H1 (cell line): ENCODE measurements at regions of chr5 and their contacts with region 1.

Region 1: DNA sequence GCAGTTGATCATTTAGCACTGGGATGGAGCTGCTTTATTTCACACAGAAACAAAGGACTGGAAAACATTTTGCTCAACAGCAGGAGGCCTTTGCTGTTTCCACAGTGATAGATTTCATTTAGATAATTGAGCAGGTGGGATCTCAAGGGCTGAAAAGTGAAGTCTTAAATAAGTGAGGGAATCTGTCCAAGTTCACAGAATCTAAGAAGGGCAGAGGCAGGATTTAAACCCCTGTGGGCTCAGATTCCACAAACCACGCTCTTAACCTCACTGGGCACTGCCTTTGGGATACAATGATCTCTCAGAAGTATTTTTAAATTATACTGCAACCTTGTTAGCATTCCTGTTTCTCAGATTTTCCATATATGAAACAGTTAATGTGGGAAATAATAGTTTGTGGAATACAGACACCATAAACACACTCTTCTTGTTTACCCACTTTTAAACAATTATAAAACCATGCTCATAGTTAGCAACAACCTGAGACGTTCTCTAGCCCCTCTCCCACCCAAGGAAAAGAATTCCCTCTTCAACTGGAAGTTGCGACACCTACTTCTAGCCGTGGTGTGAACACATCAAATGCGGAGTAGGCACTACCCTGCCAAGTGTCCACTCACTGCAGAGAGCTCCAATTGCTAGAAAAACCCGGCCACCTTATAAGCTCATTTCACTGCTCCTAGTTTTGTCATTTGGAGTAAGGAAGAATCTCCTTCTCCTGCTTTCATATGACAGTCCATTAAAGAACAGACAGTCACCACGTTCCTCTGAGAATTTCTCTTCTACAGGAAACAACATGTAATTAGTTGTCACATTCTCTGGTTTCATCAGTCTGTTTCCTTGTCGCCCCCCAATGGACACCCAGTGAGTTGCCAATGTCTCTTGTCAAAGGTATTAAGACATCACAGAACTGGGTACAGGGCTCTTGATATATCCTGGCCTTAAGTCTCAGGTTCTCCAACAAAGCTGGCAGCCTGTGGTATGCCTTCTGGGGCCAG is 47.4 kb downstream of the PRLR start:
- DNase-seq: peak; percentile 19 to 63
- H3K4me3 ChIP-seq: no peak overlapping the region
- H3K27ac ChIP-seq: no peak overlapping the region
- H3K4me1 ChIP-seq: no peaks in the 10 kb centered on the region
- H3K27me3 ChIP-seq: no peaks in the 10 kb centered on the region
- CTCF ChIP-seq: peak in 2 of 3 experiments; percentile 68 to 77; a peak in 3 of 4 replicates
- EP300 ChIP-seq: no peak
- POLR2A ChIP-seq: no peak
- RAD21 ChIP-seq: peak; percentile 82 to 90

Region 2: DNA sequence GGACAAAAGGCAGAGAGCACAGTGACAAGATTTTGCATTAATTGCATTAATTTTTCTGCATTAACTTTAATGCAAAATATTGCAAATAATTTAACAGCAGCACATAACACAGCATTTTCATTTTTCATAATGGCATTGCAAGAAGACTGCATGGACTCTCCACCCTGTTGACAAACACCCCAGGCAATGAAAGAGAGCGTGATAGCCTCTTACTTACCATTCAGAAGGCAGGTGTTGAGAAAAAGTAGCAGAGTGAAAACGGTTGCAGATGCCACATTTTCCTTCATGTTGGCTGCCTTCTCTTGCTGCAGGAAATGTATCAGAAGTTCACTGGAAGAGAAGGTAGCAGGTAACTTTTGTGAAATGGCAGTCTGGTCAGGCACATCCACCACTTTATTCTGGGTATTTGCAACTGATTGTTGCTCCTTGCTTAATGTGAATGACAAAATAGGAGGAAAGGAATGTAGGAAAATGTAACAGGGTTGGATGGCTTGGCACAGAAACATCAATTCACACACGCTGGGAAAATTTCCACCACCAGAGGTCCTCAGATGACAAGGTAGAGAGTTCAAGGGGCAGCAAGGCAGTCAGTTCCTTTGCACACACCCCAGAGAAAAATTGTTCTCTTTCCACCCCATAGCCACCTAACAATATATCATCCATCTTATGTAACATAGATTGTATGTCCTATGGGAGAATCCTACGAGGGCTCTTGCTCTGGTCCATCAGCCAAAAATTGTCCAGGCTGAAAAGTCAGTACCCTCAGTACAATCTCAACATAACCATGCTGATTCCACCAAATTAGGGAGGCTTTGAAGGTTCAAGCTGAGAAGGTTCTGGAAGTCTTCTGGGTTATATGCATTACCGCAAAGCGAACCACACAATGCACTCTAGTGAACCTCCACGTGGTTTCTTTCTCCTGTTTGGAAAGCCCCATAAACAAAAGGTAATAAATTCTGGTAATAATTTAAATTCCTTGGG is 93.2 kb before region 1 on chr5:
- CTCF ChIA-PET with region 1: interaction called, 22 read pairs
- POLR2A ChIA-PET with region 1: no interaction called
- DNase-seq: peak; percentile 29 to 84
- H3K4me3 ChIP-seq: no peak overlapping the region
- H3K27ac ChIP-seq: no peak overlapping the region
- H3K4me1 ChIP-seq: peaks cover 0 to 4% (median 1%) of the 10 kb centered on the region in 4 experiments; a peak in 2 of 7 replicates
- H3K27me3 ChIP-seq: 0 out of 7 replicates have a peak, but pooled peaks cover 0 to 2% (median 0%) of the 10 kb centered on the region in 4 experiments
- CTCF ChIP-seq: peak; percentile 65 to 94 (median 84)
- EP300 ChIP-seq: no peak
- POLR2A ChIP-seq: no peak
- RAD21 ChIP-seq: peak; percentile 99

Region 3: DNA sequence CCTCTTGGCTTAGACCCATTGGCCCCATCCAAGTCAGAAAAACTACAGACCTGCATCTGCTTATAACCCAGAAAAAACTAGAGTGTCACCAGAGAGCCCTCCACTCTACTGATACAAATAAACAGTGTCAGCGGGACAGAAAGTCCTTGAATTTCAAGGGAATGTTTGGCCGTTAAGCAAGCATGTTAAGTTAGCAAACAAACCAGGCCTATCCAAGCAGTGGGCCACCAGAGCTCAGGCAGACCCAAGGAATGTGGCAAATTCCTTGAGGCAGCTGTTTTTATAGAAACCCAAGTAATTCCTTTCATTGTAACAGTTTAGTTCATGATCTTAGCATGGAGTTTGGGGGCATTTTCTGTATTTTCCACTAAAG is 23.5 kb before region 1 on chr5:
- CTCF ChIA-PET with region 1: interaction called, 13 read pairs
- POLR2A ChIA-PET with region 1: no interaction called
- DNase-seq: peak in 1 of 2 experiments; percentile 10
- H3K4me3 ChIP-seq: no peak overlapping the region
- H3K27ac ChIP-seq: no peak overlapping the region
- H3K4me1 ChIP-seq: no peaks in the 10 kb centered on the region; a peak in 1 of 7 replicates
- H3K27me3 ChIP-seq: no peaks in the 10 kb centered on the region
- CTCF ChIP-seq: no peak
- EP300 ChIP-seq: no peak
- POLR2A ChIP-seq: no peak
- RAD21 ChIP-seq: no peak

Region 4: GRCh38 chr5:35166043-35166442 is 16.8 kb before region 1 on chr5:
- CTCF ChIA-PET with region 1: interaction called, 11 read pairs
- POLR2A ChIA-PET with region 1: no interaction called
- DNase-seq: no peak
- H3K4me3 ChIP-seq: no peak overlapping the region
- H3K27ac ChIP-seq: no peak overlapping the region
- H3K4me1 ChIP-seq: no peaks in the 10 kb centered on the region
- H3K27me3 ChIP-seq: no peaks in the 10 kb centered on the region
- CTCF ChIP-seq: no peak
- EP300 ChIP-seq: no peak
- POLR2A ChIP-seq: no peak
- RAD21 ChIP-seq: no peak

Region 5: GRCh38 chr5:35194635-35195471 is 12.0 kb after region 1 on chr5:
- CTCF ChIA-PET with region 1: interaction called, 25 read pairs
- POLR2A ChIA-PET with region 1: no interaction called
- DNase-seq: no peak
- H3K4me3 ChIP-seq: no peak overlapping the region
- H3K27ac ChIP-seq: no peak overlapping the region
- H3K4me1 ChIP-seq: no peaks in the 10 kb centered on the region
- H3K27me3 ChIP-seq: no peaks in the 10 kb centered on the region; a peak in 1 of 7 replicates
- CTCF ChIP-seq: no peak
- EP300 ChIP-seq: no peak
- POLR2A ChIP-seq: no peak
- RAD21 ChIP-seq: no peak

Region 6: GRCh38 chr5:35202319-35203111 is 19.7 kb after region 1 on chr5:
- CTCF ChIA-PET with region 1: interaction called, 13 read pairs
- POLR2A ChIA-PET with region 1: no interaction called
- DNase-seq: peak; percentile 25 to 78
- H3K4me3 ChIP-seq: no peak overlapping the region
- H3K27ac ChIP-seq: no peak overlapping the region
- H3K4me1 ChIP-seq: no peaks in the 10 kb centered on the region
- H3K27me3 ChIP-seq: no peaks in the 10 kb centered on the region
- CTCF ChIP-seq: peak; percentile 38 to 83 (median 63)
- EP300 ChIP-seq: no peak
- POLR2A ChIP-seq: no peak
- RAD21 ChIP-seq: peak; percentile 66 to 68

Region 7: GRCh38 chr5:35212122-35212982 is 29.5 kb after region 1 on chr5:
- CTCF ChIA-PET with region 1: interaction called, 11 read pairs
- POLR2A ChIA-PET with region 1: no interaction called
- DNase-seq: no peak
- H3K4me3 ChIP-seq: no peak overlapping the region
- H3K27ac ChIP-seq: no peak overlapping the region
- H3K4me1 ChIP-seq: no peaks in the 10 kb centered on the region
- H3K27me3 ChIP-seq: no peaks in the 10 kb centered on the region
- CTCF ChIP-seq: no peak
- EP300 ChIP-seq: no peak
- POLR2A ChIP-seq: no peak
- RAD21 ChIP-seq: no peak